Activated CD8-positive, alpha-beta memory T cell treated with anti-CD3 and anti-CD28 coated beads, Interleukin-2, amount 10 ng/mL, durations not matched to agents 7 days and 5 days (primary cell): ENCODE measurements at regions of chr10 and their contacts with region 1.

Region 1: DNA sequence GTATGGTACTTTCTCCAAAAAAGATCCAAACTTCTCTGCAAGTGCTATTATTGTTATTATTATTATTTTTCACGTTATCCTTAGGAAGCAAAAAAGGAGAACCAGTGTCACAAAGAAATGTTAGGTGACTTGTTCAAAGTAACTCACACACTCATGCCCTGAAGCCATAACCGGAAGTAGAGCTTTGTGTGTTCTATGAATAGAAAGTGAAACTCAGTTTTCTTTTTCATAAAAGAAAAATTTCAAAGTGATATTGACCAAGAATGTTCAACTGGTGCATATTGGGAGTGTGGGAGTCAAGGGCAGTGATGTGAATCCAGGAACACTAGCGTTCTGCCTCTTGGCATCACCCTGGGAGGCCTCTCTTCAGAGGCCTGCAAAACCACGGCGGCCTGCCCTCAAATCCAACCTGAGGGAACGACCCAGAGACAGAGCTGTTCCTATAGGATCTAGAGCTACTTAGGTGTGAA is 106.1 kb downstream of the PRKCQ start:
- DNase-seq: peak; percentile 69
- ATAC-seq: peak; percentile 81
- H3K4me3 Mint-ChIP-seq: peak overlapping the region; percentile 87
- H3K27ac Mint-ChIP-seq: peak overlapping the region; percentile 100
- H3K4me1 Mint-ChIP-seq: peaks cover 61% of the 10 kb centered on the region
- H3K27me3 Mint-ChIP-seq: no peaks in the 10 kb centered on the region

Region 2: GRCh38 chr10:6353526-6353925 is 120.4 kb before region 1 on chr10:
- CTCF ChIA-PET with region 1: no interaction called
- DNase-seq: no peak
- ATAC-seq: no peak
- H3K4me3 Mint-ChIP-seq: no peak overlapping the region
- H3K27ac Mint-ChIP-seq: no peak overlapping the region
- H3K4me1 Mint-ChIP-seq: peaks cover 18% of the 10 kb centered on the region
- H3K27me3 Mint-ChIP-seq: no peaks in the 10 kb centered on the region

Region 3: GRCh38 chr10:6493521-6494441 is 19.8 kb after region 1 on chr10:
- CTCF ChIA-PET with region 1: interaction called, 28 read pairs
- DNase-seq: no peak
- ATAC-seq: peak; percentile 16
- H3K4me3 Mint-ChIP-seq: no peak overlapping the region
- H3K27ac Mint-ChIP-seq: no peak overlapping the region
- H3K4me1 Mint-ChIP-seq: peaks cover 27% of the 10 kb centered on the region
- H3K27me3 Mint-ChIP-seq: no peaks in the 10 kb centered on the region

Region 4: GRCh38 chr10:6530211-6530840 is 56.4 kb after region 1 on chr10:
- CTCF ChIA-PET with region 1: interaction called, 17 read pairs
- DNase-seq: peak; percentile 95
- ATAC-seq: peak; percentile 96
- H3K4me3 Mint-ChIP-seq: peak overlapping the region; percentile 77
- H3K27ac Mint-ChIP-seq: peak overlapping the region; percentile 100
- H3K4me1 Mint-ChIP-seq: peaks cover 55% of the 10 kb centered on the region
- H3K27me3 Mint-ChIP-seq: no peaks in the 10 kb centered on the region